ENCODE measurements at regions of chr1 and their contacts with region 1.

Region 1: DNA sequence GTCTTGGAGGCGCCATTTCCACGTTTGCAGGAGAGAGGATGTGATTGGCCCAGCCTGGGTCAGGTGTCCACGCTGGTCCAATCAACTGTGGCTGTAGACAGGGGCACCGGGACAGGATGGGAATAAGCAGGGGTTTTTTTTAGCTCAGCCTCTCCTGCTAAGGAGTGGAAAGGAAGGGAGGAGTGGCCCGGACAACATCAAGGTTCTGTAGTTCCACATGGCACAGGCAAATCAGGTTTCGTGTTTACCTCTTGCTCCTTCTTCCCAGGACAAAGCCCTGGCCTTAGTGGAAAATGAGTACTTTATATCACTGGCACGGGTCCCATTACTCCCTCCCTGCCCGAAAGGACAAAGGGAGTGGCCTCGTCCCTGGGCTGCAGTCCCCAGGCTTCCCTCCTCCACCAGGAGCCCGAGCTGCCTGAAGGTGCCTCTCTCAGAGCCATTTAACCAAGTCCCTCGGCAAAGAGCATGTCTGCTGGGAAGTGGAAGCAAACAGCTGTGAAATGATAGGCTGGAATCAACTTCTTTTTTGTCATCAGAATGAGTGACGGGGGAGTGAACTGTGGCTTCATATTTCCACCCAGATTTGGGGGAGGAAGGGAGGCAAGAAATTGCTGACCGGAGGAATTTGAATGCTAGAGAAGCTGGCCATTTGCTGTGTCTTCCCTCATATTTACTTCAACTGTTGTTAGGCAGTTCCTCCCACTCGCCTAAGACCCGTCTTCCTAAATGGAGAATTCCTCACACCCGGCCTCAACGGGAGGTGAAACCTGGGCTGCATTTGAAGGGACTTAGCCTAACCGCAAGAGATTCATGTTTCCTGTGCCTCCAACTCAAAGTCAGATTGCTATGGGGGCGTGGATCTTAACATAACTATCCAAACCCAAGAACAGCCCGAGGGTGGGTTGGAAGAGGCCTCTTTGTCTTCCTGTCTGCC is 84.9 kb upstream of the SLC44A3 start:
- DNase-seq: peak; percentile 66 to 70 (median 69)
- ATAC-seq: peak; percentile 90
- H3K4me3 ChIP-seq: no peak overlapping the region
- H3K4me1 ChIP-seq: peaks cover 20% of the 10 kb centered on the region
- CTCF ChIP-seq: no peak

Region 2: DNA sequence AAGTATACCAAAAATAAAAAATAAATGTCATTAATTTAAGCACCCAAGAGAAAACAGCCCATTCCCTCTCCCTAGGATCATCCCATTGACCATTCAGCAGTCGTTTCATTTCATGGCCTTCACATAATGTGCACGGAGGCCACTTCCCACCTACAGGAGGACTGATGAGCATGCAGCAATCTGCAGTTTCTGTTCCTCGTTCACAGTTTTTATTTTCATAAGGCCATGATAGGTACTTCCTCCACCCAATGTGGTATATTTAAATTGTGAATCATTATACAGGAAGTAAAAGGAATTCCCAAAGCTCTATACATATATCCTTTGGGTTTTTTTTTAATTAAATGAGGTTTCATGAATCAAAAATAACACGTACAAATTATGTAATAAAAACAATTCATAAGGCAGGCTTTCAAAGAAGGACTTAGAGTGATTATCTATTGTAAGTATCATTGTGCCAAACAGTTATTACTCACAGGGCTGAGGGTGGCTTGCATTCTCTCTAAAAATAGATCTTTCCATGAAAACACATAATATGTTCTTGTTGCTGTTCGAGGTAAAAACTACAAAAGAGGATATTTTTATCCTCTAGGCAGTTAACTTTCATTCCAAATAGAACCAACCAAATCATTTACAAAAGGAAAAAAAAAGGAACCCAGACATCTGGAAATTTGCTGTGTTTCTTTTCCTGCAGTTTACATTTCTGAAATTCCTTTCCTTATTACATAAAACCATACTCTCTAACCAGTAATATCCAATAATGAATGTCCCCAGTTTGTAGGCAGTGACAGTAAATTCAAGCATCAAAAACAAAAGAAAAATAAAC is 57.5 kb after region 1 on chr1:
- intact Hi-C with region 1: loop called in 1 of 2 experiments (anchors 5 kb)
- DNase-seq: no peak
- ATAC-seq: peak; percentile 97
- H3K4me3 ChIP-seq: no peak overlapping the region
- H3K4me1 ChIP-seq: no peaks in the 10 kb centered on the region
- CTCF ChIP-seq: no peak

Measured in mucosa of descending colon (tissue), 3 donors.